ENCODE measurements at regions of chr6 and their contacts with region 1.

Region 1: DNA sequence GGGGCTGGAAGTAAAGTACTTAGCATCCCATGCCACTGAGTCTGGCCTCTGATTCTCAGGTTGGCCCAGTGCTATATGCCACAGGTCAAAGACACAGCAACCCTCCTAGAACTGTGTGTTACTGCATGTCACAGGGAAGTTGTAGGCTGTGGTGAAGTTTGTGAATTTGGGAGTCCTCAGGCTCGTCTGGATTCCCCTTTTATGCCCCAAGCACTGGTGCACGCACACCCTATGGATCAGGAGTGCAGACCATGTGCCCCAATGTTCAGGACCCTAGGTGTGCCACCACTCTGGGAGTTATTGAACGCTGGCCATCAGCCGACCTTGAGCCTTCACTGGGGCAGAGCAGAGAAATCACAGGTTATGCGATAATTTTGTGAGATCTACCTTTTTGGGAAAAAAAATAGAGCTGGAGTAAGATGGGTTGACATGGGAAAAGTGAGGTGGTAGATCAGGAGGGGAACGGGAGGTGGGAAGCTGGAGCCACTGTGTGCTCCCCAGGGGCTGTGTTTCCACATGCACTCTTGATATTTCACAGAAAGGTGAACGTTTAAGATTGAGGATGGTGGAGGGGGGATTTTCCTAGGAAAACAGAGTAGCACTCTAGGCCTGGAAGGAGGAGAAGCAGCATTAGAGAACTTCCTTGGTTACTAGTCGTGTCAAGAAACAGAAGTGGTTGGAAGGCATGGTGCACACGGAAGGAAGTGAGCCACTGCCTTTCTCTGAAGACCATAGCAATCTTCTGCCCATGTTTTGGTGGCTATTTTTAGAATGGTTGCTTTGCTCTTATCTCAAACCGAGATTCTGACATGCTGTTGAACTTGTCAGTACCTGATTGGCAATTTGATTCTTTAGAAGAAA is 44.1 kb downstream of the DUSP22 start:
- H3K4me3 Mint-ChIP-seq: peak overlapping the region; percentile 55
- H3K27ac Mint-ChIP-seq: peak overlapping the region; percentile 97
- H3K4me1 Mint-ChIP-seq: peaks cover 65% of the 10 kb centered on the region
- H3K27me3 Mint-ChIP-seq: no peaks in the 10 kb centered on the region

Region 2: DNA sequence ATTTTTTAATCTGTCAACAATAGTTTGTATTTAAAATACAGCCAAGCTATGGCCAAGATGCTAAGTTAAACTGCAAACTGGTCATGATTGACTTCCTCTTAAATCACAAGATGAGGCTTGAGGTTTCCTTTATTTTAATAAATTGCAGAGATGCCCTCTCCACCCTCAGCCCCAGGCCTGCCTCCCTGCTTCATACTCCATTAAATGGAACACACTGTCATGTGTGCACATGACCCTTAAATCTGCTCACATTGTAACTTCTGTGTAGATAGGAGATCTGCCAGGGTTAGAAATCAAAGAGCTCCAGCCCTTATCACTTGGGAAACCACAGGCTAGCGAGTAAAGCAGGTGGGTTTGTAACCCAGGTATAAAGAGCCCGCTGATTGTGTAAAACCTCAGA is 23.3 kb before region 1 on chr6:
- intact Hi-C with region 1: loop called (anchors 2 kb)
- H3K4me3 Mint-ChIP-seq: peak overlapping the region; percentile 57
- H3K27ac Mint-ChIP-seq: peak overlapping the region; percentile 93
- H3K4me1 Mint-ChIP-seq: peaks cover 92% of the 10 kb centered on the region
- H3K27me3 Mint-ChIP-seq: no peaks in the 10 kb centered on the region

Region 3: GRCh38 chr6:356828-357251 is 20.5 kb after region 1 on chr6:
- intact Hi-C with region 1: loop called (anchors 2 kb)
- H3K4me3 Mint-ChIP-seq: no peak overlapping the region
- H3K27ac Mint-ChIP-seq: peak overlapping the region; percentile 86
- H3K4me1 Mint-ChIP-seq: peaks cover 91% of the 10 kb centered on the region
- H3K27me3 Mint-ChIP-seq: peaks cover 4% of the 10 kb centered on the region

Measured in dendritic cell treated with granulocyte-macrophage colony-stimulating factor and Interleukin-4, amounts not matched to agents 40 ng/mL and 50 ng/mL, for 4 days (primary cell).